GM12878 (cell line): ENCODE measurements at regions of chr12 and their contacts with region 1.

Region 1: DNA sequence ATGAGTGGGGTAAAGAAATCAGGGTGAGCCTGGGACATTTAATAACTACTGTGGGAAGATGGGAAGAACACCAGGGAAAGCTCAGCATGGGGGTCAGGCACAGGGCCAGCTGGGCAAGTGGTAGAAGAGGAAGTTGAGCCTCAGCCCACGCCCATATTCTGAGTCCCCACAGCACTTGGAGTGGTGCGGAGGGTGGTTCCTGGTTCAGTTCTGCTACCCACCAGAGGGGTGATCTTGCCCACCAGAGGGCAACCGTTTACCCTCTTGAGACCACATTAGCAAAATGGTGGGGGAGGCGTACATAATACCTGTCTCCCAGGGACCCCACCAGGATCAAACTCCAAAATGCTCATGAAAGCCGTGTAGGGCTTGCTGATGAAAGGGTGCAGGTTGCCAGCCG is 16.8 kb upstream of the ANKRD33 start:
- DNase-seq: no peak
- ATAC-seq: no peak
- H3K4me3 ChIP-seq: no peak overlapping the region
- H3K27ac ChIP-seq: no peak overlapping the region
- H3K4me1 ChIP-seq: no peaks in the 10 kb centered on the region
- H3K27me3 ChIP-seq: peaks cover 3 to 6% of the 10 kb centered on the region in 2 experiments
- CTCF ChIP-seq: no peak
- EP300 ChIP-seq: no peak
- POLR2A ChIP-seq: no peak
- RAD21 ChIP-seq: no peak

Region 2: GRCh38 chr12:50862316-50862715 is 1008.8 kb before region 1 on chr12:
- CTCF ChIA-PET with region 1: no interaction called
- POLR2A ChIA-PET with region 1: no interaction called
- RAD21 ChIA-PET with region 1: no interaction called
- SMC1A ChIA-PET with region 1: no interaction called
- in situ Hi-C with region 1: no loop called
- intact Hi-C with region 1: no loop called
- DNase-seq: no peak
- ATAC-seq: no peak
- H3K4me3 ChIP-seq: no peak overlapping the region
- H3K27ac ChIP-seq: no peak overlapping the region
- H3K4me1 ChIP-seq: no peaks in the 10 kb centered on the region
- H3K27me3 ChIP-seq: no peaks in the 10 kb centered on the region
- CTCF ChIP-seq: no peak
- EP300 ChIP-seq: no peak
- POLR2A ChIP-seq: no peak
- RAD21 ChIP-seq: no peak

Region 3: GRCh38 chr12:51531978-51532497 is 339.1 kb before region 1 on chr12:
- CTCF ChIA-PET with region 1: interaction called, 4 read pairs
- POLR2A ChIA-PET with region 1: no interaction called
- RAD21 ChIA-PET with region 1: no interaction called
- SMC1A ChIA-PET with region 1: no interaction called
- in situ Hi-C with region 1: no loop called
- intact Hi-C with region 1: loop called (anchors 10 kb)
- DNase-seq: peak; percentile 24
- ATAC-seq: peak; percentile 98
- H3K4me3 ChIP-seq: no peak overlapping the region
- H3K27ac ChIP-seq: no peak overlapping the region
- H3K4me1 ChIP-seq: no peaks in the 10 kb centered on the region
- H3K27me3 ChIP-seq: peaks cover 0 to 2% of the 10 kb centered on the region in 2 experiments; a peak in 1 of 4 replicates
- CTCF ChIP-seq: peak; percentile 88 to 94 (median 93); a peak in 5 of 6 replicates
- EP300 ChIP-seq: no peak
- POLR2A ChIP-seq: no peak
- RAD21 ChIP-seq: peak; percentile 99

Region 4: DNA sequence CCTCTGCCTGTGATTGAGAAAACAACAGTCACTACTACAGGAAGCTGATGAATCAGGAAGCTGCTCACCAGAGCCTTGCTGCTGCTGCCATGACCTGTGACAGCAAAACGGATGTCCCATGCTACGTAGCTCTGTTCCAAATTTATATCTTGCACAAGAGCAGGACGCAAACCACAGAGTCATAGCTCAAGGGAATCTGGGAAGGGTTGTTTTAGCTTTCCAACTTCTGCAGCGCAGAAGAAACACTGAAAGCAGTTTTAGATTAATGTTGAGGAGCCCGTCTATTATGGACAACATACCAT is 14.8 kb after region 1 on chr12:
- CTCF ChIA-PET with region 1: interaction called, 14 read pairs
- POLR2A ChIA-PET with region 1: no interaction called
- RAD21 ChIA-PET with region 1: interaction called, 3 read pairs
- SMC1A ChIA-PET with region 1: no interaction called
- in situ Hi-C with region 1: no loop called
- intact Hi-C with region 1: no loop called
- DNase-seq: no peak
- ATAC-seq: 0 out of 3 replicates have a peak, but pooled peaks have one; percentile 38
- H3K4me3 ChIP-seq: no peak overlapping the region
- H3K27ac ChIP-seq: no peak overlapping the region
- H3K4me1 ChIP-seq: no peaks in the 10 kb centered on the region
- H3K27me3 ChIP-seq: no peaks in the 10 kb centered on the region
- CTCF ChIP-seq: no peak
- EP300 ChIP-seq: no peak
- POLR2A ChIP-seq: peak; percentile 41; the same call in 1 of the 2 replicates
- RAD21 ChIP-seq: no peak

Region 5: GRCh38 chr12:51905471-51906429 is 34.6 kb after region 1 on chr12:
- CTCF ChIA-PET with region 1: no interaction called
- POLR2A ChIA-PET with region 1: no interaction called
- RAD21 ChIA-PET with region 1: no interaction called
- SMC1A ChIA-PET with region 1: no interaction called
- in situ Hi-C with region 1: no loop called
- intact Hi-C with region 1: no loop called
- DNase-seq: no peak
- ATAC-seq: no peak
- H3K4me3 ChIP-seq: no peak overlapping the region
- H3K27ac ChIP-seq: no peak overlapping the region
- H3K4me1 ChIP-seq: no peaks in the 10 kb centered on the region
- H3K27me3 ChIP-seq: peaks cover 7 to 14% of the 10 kb centered on the region in 2 experiments; a peak in 3 of 4 replicates
- CTCF ChIP-seq: no peak
- EP300 ChIP-seq: no peak
- POLR2A ChIP-seq: no peak
- RAD21 ChIP-seq: no peak

Region 6: DNA sequence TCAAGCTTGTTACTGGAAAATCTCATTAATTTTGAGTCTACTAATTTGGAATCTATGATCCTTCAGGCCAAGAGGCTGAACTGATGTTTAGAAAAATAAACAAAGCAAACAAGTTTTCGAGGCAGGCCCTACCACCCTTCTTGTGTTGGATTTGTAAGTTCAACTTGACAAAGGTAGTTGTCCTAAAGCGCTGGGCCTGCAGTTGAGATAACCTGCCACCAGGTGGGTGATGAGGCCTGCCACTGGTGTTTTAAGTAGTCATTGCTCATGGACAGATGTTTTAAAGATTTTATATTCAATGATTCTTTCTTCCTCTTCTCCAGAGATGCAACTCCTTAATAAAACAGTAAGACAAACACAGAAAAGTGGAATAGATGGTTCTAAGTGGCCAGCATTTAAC is 55.6 kb after region 1 on chr12:
- CTCF ChIA-PET with region 1: no interaction called
- POLR2A ChIA-PET with region 1: no interaction called
- RAD21 ChIA-PET with region 1: no interaction called
- SMC1A ChIA-PET with region 1: no interaction called
- in situ Hi-C with region 1: no loop called
- intact Hi-C with region 1: no loop called
- DNase-seq: no peak
- ATAC-seq: peak; percentile 66
- H3K4me3 ChIP-seq: no peak overlapping the region
- H3K27ac ChIP-seq: no peak overlapping the region
- H3K4me1 ChIP-seq: peaks cover 35% of the 10 kb centered on the region
- H3K27me3 ChIP-seq: no peaks in the 10 kb centered on the region
- CTCF ChIP-seq: peak; percentile 42 to 70 (median 60)
- EP300 ChIP-seq: no peak
- POLR2A ChIP-seq: no peak
- RAD21 ChIP-seq: peak; percentile 53